Aorta (tissue), 5 donors: ENCODE measurements at regions of chr20 and their contacts with region 1.

Region 1: GRCh38 chr20:58870239-58871014 is 17.9 kb downstream of the GNAS start:
- DNase-seq: peak; percentile 79 to 85
- ATAC-seq: peak; percentile 79
- H3K4me3 ChIP-seq: no peak overlapping the region
- H3K27ac ChIP-seq: no peak overlapping the region
- H3K4me1 ChIP-seq: no peaks in the 10 kb centered on the region
- H3K27me3 ChIP-seq: no peaks in the 10 kb centered on the region

Region 2: GRCh38 chr20:58236612-58237330 is 633.7 kb before region 1 on chr20:
- intact Hi-C with region 1: no loop called
- DNase-seq: peak; percentile 82 to 93
- ATAC-seq: peak; percentile 94
- H3K4me3 ChIP-seq: peak overlapping the region; percentile 64 to 68
- H3K27ac ChIP-seq: no peak overlapping the region
- H3K4me1 ChIP-seq: no peaks in the 10 kb centered on the region
- H3K27me3 ChIP-seq: no peaks in the 10 kb centered on the region

Region 3: DNA sequence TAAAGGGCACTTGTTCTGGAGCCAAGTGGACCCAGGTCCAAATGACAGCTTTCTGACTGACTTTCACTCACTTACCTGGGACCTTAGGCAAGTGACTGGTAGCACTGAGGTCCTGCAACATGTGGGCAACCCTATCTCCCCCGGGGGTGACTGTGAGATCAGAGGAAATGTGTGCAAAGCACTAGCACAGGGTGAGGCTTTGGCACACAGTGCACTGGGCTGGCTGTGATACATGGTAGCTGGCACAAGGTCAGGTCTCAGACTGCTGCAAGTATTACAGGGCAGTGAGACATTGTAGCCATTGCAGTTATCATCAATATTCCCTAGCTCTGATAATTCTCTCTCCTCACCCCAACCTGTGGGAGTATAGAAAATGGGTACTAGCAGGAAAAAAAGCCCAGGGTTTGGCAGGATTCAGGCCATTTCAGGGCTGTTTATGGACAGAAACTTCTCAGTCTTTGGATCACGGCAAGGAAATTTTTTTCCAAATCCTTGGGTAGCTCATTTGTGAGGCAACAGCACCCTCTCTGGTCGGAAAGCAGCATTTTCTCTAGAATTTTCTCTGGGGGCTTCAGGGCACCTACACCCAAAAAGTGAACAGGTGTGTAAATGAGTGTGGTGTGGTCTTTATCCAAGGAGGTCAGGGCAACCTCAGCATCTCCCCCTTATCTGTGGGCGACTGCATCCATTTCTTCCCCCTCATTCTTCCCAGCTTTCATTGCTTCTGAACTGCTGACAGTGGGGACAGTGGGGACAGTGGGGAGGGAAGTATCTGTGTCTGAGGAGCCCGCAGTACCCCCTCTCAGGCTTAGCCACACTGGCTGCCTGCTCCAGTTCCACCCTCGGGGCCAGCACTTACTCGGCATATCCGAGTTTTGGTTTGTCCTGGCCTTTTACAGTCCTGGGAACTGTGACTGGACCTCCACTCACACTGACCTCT is 585.2 kb after region 1 on chr20:
- intact Hi-C with region 1: loop called (anchors 2 to 5 kb)
- DNase-seq: peak in 1 of 2 donors; percentile 53
- ATAC-seq: peak; percentile 56
- H3K4me3 ChIP-seq: no peak overlapping the region
- H3K27ac ChIP-seq: no peak overlapping the region
- H3K4me1 ChIP-seq: no peaks in the 10 kb centered on the region
- H3K27me3 ChIP-seq: no peaks in the 10 kb centered on the region